IMR-90 (cell line): ENCODE measurements at regions of chr4 and their contacts with region 1.

Region 1: DNA sequence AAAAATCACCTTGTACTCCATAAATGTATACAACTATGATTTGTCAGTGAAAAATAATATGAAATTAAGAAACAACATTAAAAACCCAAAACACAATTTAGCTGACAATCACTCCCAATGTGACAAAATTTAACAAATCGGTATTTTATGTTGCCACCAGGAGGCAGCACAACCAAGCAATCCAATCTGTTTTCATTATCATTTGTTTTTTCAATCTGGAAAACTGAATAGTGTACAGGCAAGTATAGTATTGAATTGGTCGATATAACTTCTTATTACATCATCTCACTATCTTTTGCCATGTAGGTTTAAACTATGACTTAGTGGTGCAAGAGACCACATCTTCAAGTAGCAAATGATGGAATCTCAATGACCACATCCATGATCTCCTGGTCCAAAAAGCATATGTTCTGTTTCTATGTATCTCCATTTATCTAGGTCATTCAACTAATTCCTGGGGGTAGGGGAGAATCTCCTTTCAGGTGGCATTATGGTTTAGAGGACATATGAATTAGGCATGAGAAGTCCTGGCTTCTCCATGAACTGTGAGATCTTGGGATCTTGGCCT is 112.9 kb upstream of the AGA start:
- DNase-seq: peak; percentile 50
- ATAC-seq: peak; percentile 68
- H3K4me3 ChIP-seq: no peak overlapping the region
- H3K27ac ChIP-seq: no peak overlapping the region
- H3K4me1 ChIP-seq: no peaks in the 10 kb centered on the region
- H3K27me3 ChIP-seq: no peaks in the 10 kb centered on the region
- CTCF ChIP-seq: peak; percentile 76
- POLR2A ChIP-seq: no peak
- RAD21 ChIP-seq: peak; percentile 85

Region 2: GRCh38 chr4:177229331-177229730 is 325.8 kb before region 1 on chr4:
- CTCF ChIA-PET with region 1: no interaction called
- POLR2A ChIA-PET with region 1: no interaction called
- dilution Hi-C with region 1: no loop called
- in situ Hi-C with region 1: no loop called
- intact Hi-C with region 1: no loop called
- DNase-seq: peak; percentile 35
- ATAC-seq: peak; percentile 65
- H3K4me3 ChIP-seq: peak overlapping the region; percentile 44
- H3K27ac ChIP-seq: peak overlapping the region; percentile 70
- H3K4me1 ChIP-seq: peaks cover 7% of the 10 kb centered on the region
- H3K27me3 ChIP-seq: no peaks in the 10 kb centered on the region
- CTCF ChIP-seq: no peak
- POLR2A ChIP-seq: no peak
- RAD21 ChIP-seq: no peak

Region 3: DNA sequence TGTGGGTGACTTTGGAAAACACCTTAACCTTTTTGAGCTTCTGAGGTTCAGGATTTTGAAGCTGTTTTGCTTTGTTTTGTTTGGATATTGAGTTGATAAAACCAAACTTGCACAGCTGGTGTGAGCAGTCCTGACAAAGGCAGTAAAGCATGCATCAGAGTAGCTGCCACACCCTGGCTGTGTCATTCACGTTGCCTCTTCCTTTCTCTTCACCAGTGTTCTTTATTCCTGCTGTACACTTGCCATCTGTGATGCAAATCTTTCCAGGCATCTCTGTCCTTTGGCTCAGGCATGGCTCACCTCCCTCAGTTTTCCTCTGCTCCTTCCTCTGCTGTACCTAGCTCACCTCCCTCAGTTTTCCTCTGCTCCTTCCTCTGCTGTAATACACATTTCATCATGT is 1737.4 kb after region 1 on chr4:
- CTCF ChIA-PET with region 1: no interaction called
- POLR2A ChIA-PET with region 1: no interaction called
- dilution Hi-C with region 1: no loop called
- in situ Hi-C with region 1: loop called (anchors 25 kb)
- intact Hi-C with region 1: no loop called
- DNase-seq: no peak
- ATAC-seq: no peak
- H3K4me3 ChIP-seq: no peak overlapping the region
- H3K27ac ChIP-seq: no peak overlapping the region
- H3K4me1 ChIP-seq: no peaks in the 10 kb centered on the region
- H3K27me3 ChIP-seq: no peaks in the 10 kb centered on the region
- CTCF ChIP-seq: no peak
- POLR2A ChIP-seq: no peak
- RAD21 ChIP-seq: no peak

Region 4: GRCh38 chr4:179307297-179308136 is 1752.4 kb after region 1 on chr4:
- CTCF ChIA-PET with region 1: no interaction called
- POLR2A ChIA-PET with region 1: no interaction called
- dilution Hi-C with region 1: no loop called
- in situ Hi-C with region 1: no loop called
- intact Hi-C with region 1: loop called (anchors 1 kb)
- DNase-seq: peak; percentile 23
- ATAC-seq: peak; percentile 71
- H3K4me3 ChIP-seq: no peak overlapping the region
- H3K27ac ChIP-seq: no peak overlapping the region
- H3K4me1 ChIP-seq: no peaks in the 10 kb centered on the region
- H3K27me3 ChIP-seq: no peaks in the 10 kb centered on the region
- CTCF ChIP-seq: peak; percentile 55
- POLR2A ChIP-seq: no peak
- RAD21 ChIP-seq: peak; percentile 69